MCF 10A (cell line): ENCODE measurements at regions of chr17 and their contacts with region 1.

Region 1: DNA sequence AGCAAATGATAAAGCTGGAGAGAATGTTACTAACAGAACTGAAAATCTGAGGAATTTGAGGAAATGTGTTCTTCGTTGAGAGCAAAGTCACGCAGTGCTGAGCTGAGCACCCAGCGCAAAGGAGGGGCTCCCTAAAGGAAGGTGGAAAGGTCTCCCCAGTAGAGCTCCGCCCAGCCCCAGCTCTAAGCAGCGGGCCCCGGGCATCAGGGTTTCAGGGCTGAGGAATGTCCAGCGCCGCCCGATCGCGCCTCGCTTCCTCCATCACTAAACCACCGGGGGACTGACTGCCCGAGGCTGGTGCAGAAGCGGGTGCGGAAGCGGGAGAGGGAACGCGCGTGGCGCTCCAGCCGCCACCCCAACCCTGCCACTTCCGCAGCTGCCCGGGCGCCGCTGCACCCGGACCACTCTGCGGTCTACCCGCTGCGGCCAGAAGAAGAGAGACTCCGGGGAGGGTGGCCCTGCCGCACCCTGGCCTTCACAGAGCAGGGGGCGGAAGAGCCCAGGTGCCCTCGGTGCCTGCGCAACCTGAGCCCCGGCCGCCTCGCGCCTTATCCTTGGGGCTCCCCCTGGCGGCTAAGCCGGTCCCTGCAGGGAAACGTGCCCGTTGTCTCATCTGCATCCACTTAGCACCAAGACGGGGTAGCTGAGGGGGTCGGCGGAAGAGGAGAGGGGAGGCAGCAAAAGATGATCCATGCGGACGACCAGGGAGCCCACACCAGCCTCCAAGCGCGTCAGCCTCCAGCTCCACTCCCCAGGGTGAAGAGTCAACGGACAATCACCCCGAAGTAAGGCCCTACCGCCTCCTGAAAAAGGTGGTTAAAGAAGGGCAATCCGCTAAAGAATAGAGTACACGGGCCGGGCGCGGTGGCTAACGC is 12.4 kb upstream of the GUCY2D start:
- DNase-seq: peak; percentile 80
- H3K4me3 Mint-ChIP-seq: peak overlapping the region; percentile 63
- H3K27ac Mint-ChIP-seq: no peak overlapping the region
- H3K4me1 Mint-ChIP-seq: peaks cover 13% of the 10 kb centered on the region
- H3K27me3 Mint-ChIP-seq: no peaks in the 10 kb centered on the region
- CTCF ChIP-seq: peak; percentile 91

Region 2: DNA sequence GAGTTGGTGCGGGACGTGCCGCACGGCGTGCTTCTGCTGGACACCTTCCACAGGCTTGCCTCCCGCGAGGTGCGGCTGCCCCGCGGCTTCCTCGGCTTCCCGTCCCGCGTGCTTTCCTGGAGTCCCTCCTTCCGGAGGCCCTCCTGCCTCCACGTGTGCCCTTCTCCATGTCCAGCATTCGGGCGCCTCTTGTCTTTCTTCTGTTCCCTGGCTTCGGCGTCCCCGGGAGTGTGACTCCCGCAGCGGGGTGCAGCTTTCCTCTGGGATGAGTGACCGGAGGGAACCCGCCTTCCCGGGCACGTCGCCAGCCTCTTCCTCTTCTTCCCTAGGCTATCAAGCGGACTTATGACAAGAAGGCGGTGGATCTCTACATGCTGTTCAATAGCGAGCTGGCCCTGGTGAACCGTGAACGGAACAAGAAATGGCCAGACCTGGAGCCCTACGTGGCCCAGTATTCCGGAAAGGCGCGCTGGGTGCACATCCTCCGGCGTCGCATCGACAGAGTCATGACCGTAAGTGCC is 249.5 kb before region 1 on chr17:
- CTCF ChIA-PET with region 1: interaction called, 27 read pairs
- POLR2A ChIA-PET with region 1: interaction called, 3 read pairs
- intact Hi-C with region 1: loop called (anchors 2 kb)
- DNase-seq: no peak
- H3K4me3 Mint-ChIP-seq: peak overlapping the region; percentile 67
- H3K27ac Mint-ChIP-seq: peak overlapping the region; percentile 43
- H3K4me1 Mint-ChIP-seq: peaks cover 6% of the 10 kb centered on the region
- H3K27me3 Mint-ChIP-seq: peaks cover 56% of the 10 kb centered on the region
- CTCF ChIP-seq: no peak

Region 3: DNA sequence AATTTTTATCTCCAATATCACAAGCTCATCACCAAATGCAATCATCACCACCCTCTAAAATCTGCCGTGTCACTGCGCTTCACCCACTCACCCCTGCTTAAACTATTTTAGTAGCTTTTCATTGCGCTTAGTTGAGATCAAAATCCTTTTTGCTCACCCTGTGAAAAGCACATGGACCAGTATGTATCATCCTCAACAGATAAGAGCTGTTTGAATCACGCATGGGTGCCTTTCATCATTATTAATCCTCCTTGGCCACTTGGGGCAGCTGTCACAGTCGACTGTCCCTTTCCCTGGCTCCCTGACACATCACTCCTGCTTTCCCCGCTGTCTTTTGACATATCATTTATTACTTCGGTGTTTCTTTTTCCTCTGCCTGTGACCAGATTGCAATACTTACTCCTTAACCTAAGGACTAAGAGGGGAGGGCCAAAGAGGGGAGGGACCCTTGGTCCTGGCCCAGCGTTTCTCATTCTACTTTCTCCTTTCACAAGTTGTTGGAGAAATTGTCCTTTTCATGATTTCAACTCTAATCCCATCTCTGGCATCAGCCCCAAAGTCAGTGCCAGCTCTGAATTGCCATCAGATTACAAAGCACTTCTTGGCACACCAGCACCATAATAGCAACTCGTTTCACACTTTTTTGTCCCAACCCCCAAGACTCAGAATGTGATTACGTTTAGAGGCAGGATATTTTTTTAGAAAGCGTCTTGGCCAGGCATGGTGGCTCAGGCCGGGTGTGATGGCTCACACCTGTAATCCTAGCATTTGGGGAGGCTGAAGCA is 164.6 kb before region 1 on chr17:
- CTCF ChIA-PET with region 1: interaction called, 11 read pairs
- POLR2A ChIA-PET with region 1: interaction called, 3 read pairs
- intact Hi-C with region 1: loop called (anchors 2 kb)
- DNase-seq: no peak
- H3K4me3 Mint-ChIP-seq: no peak overlapping the region
- H3K27ac Mint-ChIP-seq: no peak overlapping the region
- H3K4me1 Mint-ChIP-seq: peaks cover 22% of the 10 kb centered on the region
- H3K27me3 Mint-ChIP-seq: peaks cover 22% of the 10 kb centered on the region
- CTCF ChIP-seq: no peak

Region 4: DNA sequence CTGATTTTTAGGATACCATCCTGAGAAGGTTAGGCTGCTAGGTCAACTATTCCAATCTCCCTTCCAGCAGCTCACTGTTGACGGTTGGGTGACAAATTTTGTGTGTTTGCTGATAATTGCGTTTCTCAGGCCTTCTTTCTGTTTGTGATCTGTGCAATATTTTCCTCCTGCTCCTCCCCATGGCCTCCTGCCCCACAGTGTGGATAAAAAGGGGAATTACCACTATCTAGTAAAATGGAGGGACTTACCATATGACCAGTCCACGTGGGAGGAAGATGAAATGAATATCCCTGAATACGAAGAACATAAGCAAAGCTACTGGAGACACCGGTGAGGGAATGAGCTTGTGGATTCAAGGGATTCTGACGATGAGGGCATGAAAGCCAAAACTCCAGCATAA is 92.2 kb before region 1 on chr17:
- CTCF ChIA-PET with region 1: interaction called, 24 read pairs
- POLR2A ChIA-PET with region 1: interaction called, 3 read pairs
- intact Hi-C with region 1: no loop called
- DNase-seq: peak; percentile 51
- H3K4me3 Mint-ChIP-seq: no peak overlapping the region
- H3K27ac Mint-ChIP-seq: no peak overlapping the region
- H3K4me1 Mint-ChIP-seq: peaks cover 4% of the 10 kb centered on the region
- H3K27me3 Mint-ChIP-seq: no peaks in the 10 kb centered on the region
- CTCF ChIP-seq: peak; percentile 51

Region 5: GRCh38 chr17:7959503-7960253 is 30.3 kb before region 1 on chr17:
- CTCF ChIA-PET with region 1: interaction called, 10 read pairs
- POLR2A ChIA-PET with region 1: no interaction called
- intact Hi-C with region 1: no loop called
- DNase-seq: peak; percentile 27
- H3K4me3 Mint-ChIP-seq: no peak overlapping the region
- H3K27ac Mint-ChIP-seq: no peak overlapping the region
- H3K4me1 Mint-ChIP-seq: peaks cover 6% of the 10 kb centered on the region
- H3K27me3 Mint-ChIP-seq: no peaks in the 10 kb centered on the region
- CTCF ChIP-seq: no peak

Region 6: GRCh38 chr17:8041249-8041928 is 51.4 kb after region 1 on chr17:
- CTCF ChIA-PET with region 1: interaction called, 30 read pairs
- POLR2A ChIA-PET with region 1: interaction called, 11 read pairs
- intact Hi-C with region 1: loop called (anchors 1 kb)
- DNase-seq: peak; percentile 91
- H3K4me3 Mint-ChIP-seq: peak overlapping the region; percentile 82
- H3K27ac Mint-ChIP-seq: peak overlapping the region; percentile 95
- H3K4me1 Mint-ChIP-seq: peaks cover 23% of the 10 kb centered on the region
- H3K27me3 Mint-ChIP-seq: no peaks in the 10 kb centered on the region
- CTCF ChIP-seq: peak; percentile 87